Activated CD8-positive, alpha-beta T cell treated with anti-CD3 and anti-CD28 coated beads, Interleukin-2, amount 10 ng/mL, durations not matched to agents 7 days and 5 days (primary cell): ENCODE measurements at regions of chr3 and their contacts with region 1.

Region 1: DNA sequence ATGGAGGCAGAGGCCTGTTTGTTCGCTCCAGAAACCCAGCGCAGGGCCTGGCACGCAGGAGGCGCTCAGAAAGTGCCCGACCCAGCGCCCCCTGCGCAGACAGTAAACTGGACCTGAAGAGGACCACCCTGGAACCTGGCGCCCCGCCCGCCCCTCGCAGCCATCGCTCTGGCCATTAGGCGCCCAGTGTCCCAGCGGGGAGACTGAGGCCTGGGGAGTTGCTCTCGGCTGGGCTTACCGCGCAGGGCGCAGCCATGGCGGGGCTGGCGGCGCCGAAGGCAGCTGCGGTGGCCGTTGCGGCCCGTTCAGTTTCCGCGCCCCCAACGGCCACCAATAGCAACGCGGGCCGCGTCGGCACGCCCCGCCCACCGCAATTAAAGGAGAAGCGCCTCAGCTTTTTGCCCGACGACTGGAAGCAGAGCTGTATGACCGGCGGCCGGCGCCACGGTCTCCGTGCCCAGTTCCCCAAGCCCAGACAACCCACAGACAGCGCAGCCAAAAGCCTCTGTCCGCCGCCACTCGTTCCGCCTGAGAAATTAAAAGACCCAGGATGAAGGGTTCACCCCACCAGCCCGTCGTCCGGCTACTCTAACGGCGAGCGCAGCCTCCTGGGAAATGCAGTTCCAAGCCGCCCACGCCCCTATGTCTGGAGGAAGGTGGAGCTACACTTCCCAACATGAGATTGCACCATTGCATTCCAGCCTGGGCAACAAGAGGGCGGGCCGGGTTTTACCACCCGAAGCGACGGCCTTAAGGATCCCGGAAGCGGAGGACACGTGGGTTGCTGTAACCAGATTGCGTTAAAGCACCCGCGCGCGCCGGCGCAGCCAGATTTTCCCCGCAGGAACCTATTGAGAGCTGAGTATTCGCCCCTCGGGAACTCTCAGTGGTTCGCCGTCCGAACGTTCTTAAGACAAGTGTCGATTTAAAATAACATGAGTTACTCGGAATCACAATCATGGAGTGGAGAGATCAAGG is at the start of gene POC1A:
- DNase-seq: peak; percentile 93
- ATAC-seq: peak; percentile 90
- H3K4me3 Mint-ChIP-seq: peak within 1 kb of the TSS; percentile 88
- H3K27ac Mint-ChIP-seq: peak within 1 kb of the TSS; percentile 96
- H3K4me1 Mint-ChIP-seq: peaks cover 28% of the 10 kb centered on the region
- H3K27me3 Mint-ChIP-seq: no peaks in the 10 kb centered on the region
- total RNA-seq, gene POC1A: 31.7 to 32.3 TPM

Region 2: DNA sequence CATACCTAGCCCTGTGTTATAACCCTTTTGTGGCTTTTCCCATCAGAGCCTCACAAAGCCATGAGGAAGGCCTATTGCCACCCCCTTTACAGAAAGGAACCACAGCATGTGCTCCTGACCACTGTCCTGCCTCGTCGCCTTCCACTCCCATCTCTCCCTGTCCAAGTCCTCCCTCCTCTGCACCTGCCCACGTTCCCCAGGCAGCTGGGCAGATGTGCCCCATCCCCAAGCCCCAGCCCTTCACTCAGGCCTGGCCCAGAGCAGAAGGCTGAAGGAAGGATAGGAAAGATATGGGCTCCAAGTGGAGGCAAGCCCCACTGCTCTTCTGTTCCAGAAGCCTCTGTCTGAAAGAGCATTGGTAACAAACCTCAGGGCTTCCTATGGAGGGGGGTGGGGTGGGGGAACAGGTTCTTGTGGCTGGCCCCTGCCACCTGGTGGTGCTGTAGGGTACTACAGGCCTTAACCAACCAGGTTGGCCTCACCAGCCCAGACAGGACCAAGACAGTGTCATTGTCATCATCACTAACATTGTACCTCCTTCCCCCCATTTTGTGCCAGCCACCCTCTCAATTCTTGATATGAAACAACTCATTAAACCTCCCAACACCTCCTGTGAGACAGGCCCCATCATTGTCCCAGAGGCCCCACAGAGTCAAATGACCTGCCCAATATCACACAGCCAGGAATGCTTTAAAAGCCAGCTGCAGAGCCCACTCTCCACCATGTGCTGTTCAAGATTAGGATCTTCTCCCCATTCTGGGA is 10.2 kb before region 1 on chr3:
- CTCF ChIA-PET with region 1: interaction called, 10 read pairs
- POLR2A ChIA-PET with region 1: interaction called, 4 read pairs
- DNase-seq: peak; percentile 92
- ATAC-seq: peak; percentile 92
- H3K4me3 Mint-ChIP-seq: no peak overlapping the region
- H3K27ac Mint-ChIP-seq: peak overlapping the region; percentile 82
- H3K4me1 Mint-ChIP-seq: peaks cover 14% of the 10 kb centered on the region
- H3K27me3 Mint-ChIP-seq: no peaks in the 10 kb centered on the region